Activated T-helper 2 cell treated with anti-CD3 and anti-CD28 coated beads, Interferon-gamma antibody, Interleukin-2, Interleukin-4, amounts not matched to agents 10 μg/mL and 5 μg/mL and 100 μg/mL, durations not matched to agents 14 hours and 24 hours and 36 hours (primary cell): ENCODE measurements at regions of chr12 and their contacts with region 1.

Region 1: GRCh38 chr12:67592216-67593011 is 56.1 kb upstream of the DYRK2 start:
- DNase-seq: no peak
- H3K4me3 Mint-ChIP-seq: peak overlapping the region; percentile 51
- H3K27ac Mint-ChIP-seq: peak overlapping the region; percentile 83
- H3K4me1 Mint-ChIP-seq: peaks cover 34% of the 10 kb centered on the region
- H3K27me3 Mint-ChIP-seq: peaks cover 6% of the 10 kb centered on the region

Region 2: DNA sequence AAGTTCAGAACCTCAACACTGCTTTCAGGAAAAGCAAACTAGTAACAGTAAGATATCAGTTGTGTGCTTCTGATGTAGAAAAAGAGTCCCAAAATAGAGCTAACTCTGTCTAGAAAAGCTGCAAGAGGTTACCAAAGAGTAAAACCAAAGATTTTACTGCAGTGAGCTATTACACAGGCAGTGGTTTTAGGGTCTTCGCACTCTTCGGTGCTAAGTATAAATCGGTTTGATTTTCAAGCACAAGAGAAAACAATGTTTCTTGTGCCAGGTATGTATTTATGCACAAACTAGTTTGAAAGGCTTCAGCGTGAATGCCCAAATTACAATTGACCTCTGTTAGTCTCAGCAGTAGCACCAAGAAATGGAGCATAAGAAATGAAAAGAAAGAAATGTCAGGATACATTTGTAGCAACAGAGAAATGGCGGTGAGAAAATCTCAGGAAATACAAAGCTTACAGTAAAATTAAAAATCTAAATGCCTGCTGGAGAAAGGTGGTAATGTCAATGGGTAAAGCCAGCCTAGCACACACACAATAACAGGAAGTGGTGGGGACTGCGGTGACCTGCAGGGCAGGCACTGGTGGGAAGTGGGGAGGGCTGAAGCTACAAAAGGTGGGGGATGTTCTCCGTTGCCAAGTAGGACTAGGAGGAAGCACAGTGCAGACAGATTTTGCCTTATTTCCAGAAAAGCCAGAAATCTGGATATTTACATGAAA is 38.1 kb after region 1 on chr12:
- intact Hi-C with region 1: loop called (anchors 5 kb)
- DNase-seq: peak; percentile 81
- H3K4me3 Mint-ChIP-seq: peak overlapping the region; percentile 7
- H3K27ac Mint-ChIP-seq: peak overlapping the region; percentile 52
- H3K4me1 Mint-ChIP-seq: peaks cover 42% of the 10 kb centered on the region
- H3K27me3 Mint-ChIP-seq: peaks cover 1% of the 10 kb centered on the region